H1 (cell line): ENCODE measurements at regions of chr6 and their contacts with region 1.

Region 1: GRCh38 chr6:79813854-79814709 is 133.3 kb downstream of the ELOVL4 start:
- DNase-seq: peak; percentile 7 to 80
- H3K4me3 ChIP-seq: no peak overlapping the region
- H3K27ac ChIP-seq: no peak overlapping the region
- H3K4me1 ChIP-seq: peaks cover 0 to 7% (median 4%) of the 10 kb centered on the region in 4 experiments; a peak in 3 of 7 replicates
- H3K27me3 ChIP-seq: no peaks in the 10 kb centered on the region
- CTCF ChIP-seq: peak; percentile 27 to 83 (median 81)
- EP300 ChIP-seq: no peak
- POLR2A ChIP-seq: no peak
- RAD21 ChIP-seq: peak; percentile 78 to 85

Region 2: DNA sequence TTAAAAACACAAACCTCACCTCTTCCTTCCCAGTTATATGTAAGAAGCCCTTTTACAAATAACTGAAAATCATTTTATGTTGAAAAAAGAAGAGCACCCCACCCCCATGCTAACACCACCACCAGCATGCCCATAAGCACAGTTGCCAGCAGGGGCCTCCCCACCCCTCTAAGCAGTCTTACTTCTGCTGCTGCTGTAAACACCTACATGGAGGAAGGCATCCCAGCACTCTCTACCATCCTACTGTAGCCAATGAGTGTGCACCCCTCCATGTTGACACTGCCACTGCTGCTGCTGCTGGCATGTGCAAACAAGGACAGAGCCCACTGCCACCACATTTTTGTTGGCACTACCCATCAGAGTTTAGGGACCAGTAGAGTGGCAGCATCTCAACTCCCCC is 686.4 kb before region 1 on chr6:
- CTCF ChIA-PET with region 1: no interaction called
- POLR2A ChIA-PET with region 1: no interaction called
- DNase-seq: no peak
- H3K4me3 ChIP-seq: no peak overlapping the region
- H3K27ac ChIP-seq: no peak overlapping the region
- H3K4me1 ChIP-seq: no peaks in the 10 kb centered on the region
- H3K27me3 ChIP-seq: no peaks in the 10 kb centered on the region
- CTCF ChIP-seq: peak; percentile 42 to 59 (median 56); a peak in 3 of 4 replicates
- EP300 ChIP-seq: no peak
- POLR2A ChIP-seq: no peak
- RAD21 ChIP-seq: peak; percentile 66 to 76

Region 3: DNA sequence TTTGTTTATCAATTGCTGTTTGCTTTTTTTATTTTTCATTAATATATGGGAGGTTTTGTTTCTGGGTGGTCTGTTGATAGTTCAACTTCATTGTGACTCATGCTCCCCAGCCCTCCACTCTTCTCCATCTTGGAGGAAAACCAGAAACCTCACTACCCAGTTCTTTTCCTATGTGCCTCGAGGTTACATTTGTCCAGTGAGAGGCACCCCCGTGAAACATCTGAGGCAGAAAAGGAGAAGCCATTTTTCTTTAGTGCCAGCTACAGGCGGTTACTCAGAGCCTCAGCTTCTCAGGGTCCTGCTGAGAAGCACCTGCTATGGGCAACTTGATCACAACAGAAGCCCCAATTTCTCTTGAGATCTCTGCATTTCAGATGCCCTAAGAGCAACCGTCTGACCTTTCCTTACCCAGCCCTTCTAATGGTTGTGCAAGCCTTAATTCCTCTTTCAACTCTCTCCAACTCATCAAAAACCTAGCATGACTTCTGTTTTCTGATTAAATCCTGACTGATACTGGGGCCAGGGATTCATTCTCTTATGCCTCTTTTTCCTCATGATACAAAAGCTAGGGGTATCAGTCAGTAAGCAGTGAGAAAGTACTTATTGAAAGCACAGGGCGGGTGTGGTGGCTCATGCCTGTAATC is 11.3 kb before region 1 on chr6:
- CTCF ChIA-PET with region 1: interaction called, 13 read pairs
- POLR2A ChIA-PET with region 1: no interaction called
- DNase-seq: no peak
- H3K4me3 ChIP-seq: no peak overlapping the region
- H3K27ac ChIP-seq: no peak overlapping the region
- H3K4me1 ChIP-seq: no peaks in the 10 kb centered on the region
- H3K27me3 ChIP-seq: no peaks in the 10 kb centered on the region
- CTCF ChIP-seq: no peak
- EP300 ChIP-seq: no peak
- POLR2A ChIP-seq: no peak
- RAD21 ChIP-seq: no peak